Activated naive CD4-positive, alpha-beta T cell treated with anti-CD3 and anti-CD28 coated beads for 36 hours (primary cell): ENCODE measurements at regions of chr10 and their contacts with region 1.

Region 1: GRCh38 chr10:89369156-89370105 is 8.4 kb upstream of the IFIT1B start:
- DNase-seq: peak; percentile 39
- H3K4me3 Mint-ChIP-seq: no peak overlapping the region
- H3K27ac Mint-ChIP-seq: no peak overlapping the region
- H3K4me1 Mint-ChIP-seq: peaks cover 18% of the 10 kb centered on the region
- H3K27me3 Mint-ChIP-seq: no peaks in the 10 kb centered on the region

Region 2: GRCh38 chr10:89296220-89296648 is 73.2 kb before region 1 on chr10:
- CTCF ChIA-PET with region 1: interaction called, 26 read pairs
- intact Hi-C with region 1: loop called (anchors 1 kb)
- DNase-seq: no peak
- H3K4me3 Mint-ChIP-seq: no peak overlapping the region
- H3K27ac Mint-ChIP-seq: no peak overlapping the region
- H3K4me1 Mint-ChIP-seq: peaks cover 17% of the 10 kb centered on the region
- H3K27me3 Mint-ChIP-seq: no peaks in the 10 kb centered on the region

Region 3: GRCh38 chr10:89301721-89302445 is 67.5 kb before region 1 on chr10 and contains the start of gene IFIT2:
- CTCF ChIA-PET with region 1: interaction called, 26 read pairs
- intact Hi-C with region 1: no loop called
- DNase-seq: peak; percentile 22
- H3K4me3 Mint-ChIP-seq: peak within 1 kb of the TSS; percentile 79
- H3K27ac Mint-ChIP-seq: peak within 1 kb of the TSS; percentile 65
- H3K4me1 Mint-ChIP-seq: peaks cover 32% of the 10 kb centered on the region
- H3K27me3 Mint-ChIP-seq: no peaks in the 10 kb centered on the region
- total RNA-seq, gene IFIT2: 35.7 to 39.4 TPM

Region 4: GRCh38 chr10:89337484-89337883 is 31.9 kb before region 1 on chr10:
- CTCF ChIA-PET with region 1: interaction called, 12 read pairs
- intact Hi-C with region 1: no loop called
- DNase-seq: peak; percentile 76
- H3K4me3 Mint-ChIP-seq: peak overlapping the region; percentile 10
- H3K27ac Mint-ChIP-seq: no peak overlapping the region
- H3K4me1 Mint-ChIP-seq: peaks cover 43% of the 10 kb centered on the region
- H3K27me3 Mint-ChIP-seq: peaks cover 8% of the 10 kb centered on the region

Region 5: DNA sequence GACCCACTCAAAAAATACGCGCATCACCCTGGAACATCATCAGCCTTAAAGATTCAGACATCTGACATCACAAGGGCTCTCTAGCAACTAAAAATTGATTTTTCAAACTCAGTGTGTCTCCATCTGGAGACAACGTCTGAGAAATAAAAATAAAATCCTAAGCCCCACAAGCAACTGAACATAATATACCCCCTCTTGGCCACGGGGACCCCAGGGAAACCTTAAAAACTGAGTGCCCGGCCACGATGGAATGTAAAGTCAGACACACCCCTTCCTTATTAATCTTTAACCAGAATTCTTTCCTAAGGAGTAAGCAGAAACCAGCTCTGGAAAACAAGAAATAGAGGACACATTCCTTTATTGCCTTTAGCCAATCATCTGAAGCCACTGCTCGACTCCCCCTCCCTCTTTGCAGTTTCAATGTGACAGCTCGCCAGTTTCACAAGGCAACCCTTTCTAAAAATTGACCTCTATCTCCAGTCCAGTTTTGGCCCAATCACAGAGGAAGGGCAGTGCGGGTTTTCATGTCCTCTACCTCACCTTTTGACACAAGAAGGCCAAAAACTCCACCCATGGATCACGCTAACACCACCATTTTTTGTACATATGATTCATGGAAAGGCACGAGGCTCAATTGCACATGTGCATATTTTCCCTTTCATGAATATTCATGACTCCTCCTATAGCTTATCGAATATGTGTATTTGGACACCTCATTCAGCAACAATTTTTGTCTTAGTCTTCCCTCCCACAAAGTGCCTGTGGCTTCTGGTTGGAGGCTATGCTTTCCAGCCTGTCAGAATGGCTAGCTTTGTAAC is 17.4 kb before region 1 on chr10:
- CTCF ChIA-PET with region 1: interaction called, 8 read pairs
- intact Hi-C with region 1: loop called (anchors 2 kb)
- DNase-seq: no peak
- H3K4me3 Mint-ChIP-seq: no peak overlapping the region
- H3K27ac Mint-ChIP-seq: no peak overlapping the region
- H3K4me1 Mint-ChIP-seq: peaks cover 37% of the 10 kb centered on the region
- H3K27me3 Mint-ChIP-seq: peaks cover 2% of the 10 kb centered on the region

Region 6: GRCh38 chr10:89391917-89392756 is 22.7 kb after region 1 on chr10 and contains the start of gene IFIT1:
- CTCF ChIA-PET with region 1: interaction called, 9 read pairs
- intact Hi-C with region 1: loop called (anchors 2 kb)
- DNase-seq: peak; percentile 52
- H3K4me3 Mint-ChIP-seq: peak within 1 kb of the TSS; percentile 73
- H3K27ac Mint-ChIP-seq: peak within 1 kb of the TSS; percentile 70
- H3K4me1 Mint-ChIP-seq: peaks cover 30% of the 10 kb centered on the region
- H3K27me3 Mint-ChIP-seq: no peaks in the 10 kb centered on the region
- total RNA-seq, gene IFIT1: 5.9 to 6.0 TPM

Region 7: GRCh38 chr10:89563861-89564478 is 194.5 kb after region 1 on chr10:
- CTCF ChIA-PET with region 1: no interaction called
- intact Hi-C with region 1: loop called (anchors 5 kb)
- DNase-seq: peak; percentile 27
- H3K4me3 Mint-ChIP-seq: no peak overlapping the region
- H3K27ac Mint-ChIP-seq: no peak overlapping the region
- H3K4me1 Mint-ChIP-seq: no peaks in the 10 kb centered on the region
- H3K27me3 Mint-ChIP-seq: peaks cover 8% of the 10 kb centered on the region

Region 8: GRCh38 chr10:89929282-89930026 is 560.0 kb after region 1 on chr10:
- CTCF ChIA-PET with region 1: no interaction called
- intact Hi-C with region 1: no loop called
- DNase-seq: no peak
- H3K4me3 Mint-ChIP-seq: no peak overlapping the region
- H3K27ac Mint-ChIP-seq: no peak overlapping the region
- H3K4me1 Mint-ChIP-seq: no peaks in the 10 kb centered on the region
- H3K27me3 Mint-ChIP-seq: peaks cover 6% of the 10 kb centered on the region